Ascending aorta (tissue), 2 donors: ENCODE measurements at regions of chr19 and their contacts with region 1.

Region 1: GRCh38 chr19:39970675-39971379 is at the start of gene PSMC4:
- DNase-seq: peak; percentile 95 to 99
- H3K4me3 ChIP-seq: peak within 1 kb of the TSS; percentile 75 to 76
- H3K27ac ChIP-seq: peak within 1 kb of the TSS; percentile 86 to 90
- H3K4me1 ChIP-seq: peaks cover 0 to 14% of the 10 kb centered on the region in 2 donors
- H3K27me3 ChIP-seq: no peaks in the 10 kb centered on the region
- CTCF ChIP-seq: peak; percentile 66 to 78 (median 75)
- total RNA-seq, gene PSMC4: 122 TPM

Region 2: DNA sequence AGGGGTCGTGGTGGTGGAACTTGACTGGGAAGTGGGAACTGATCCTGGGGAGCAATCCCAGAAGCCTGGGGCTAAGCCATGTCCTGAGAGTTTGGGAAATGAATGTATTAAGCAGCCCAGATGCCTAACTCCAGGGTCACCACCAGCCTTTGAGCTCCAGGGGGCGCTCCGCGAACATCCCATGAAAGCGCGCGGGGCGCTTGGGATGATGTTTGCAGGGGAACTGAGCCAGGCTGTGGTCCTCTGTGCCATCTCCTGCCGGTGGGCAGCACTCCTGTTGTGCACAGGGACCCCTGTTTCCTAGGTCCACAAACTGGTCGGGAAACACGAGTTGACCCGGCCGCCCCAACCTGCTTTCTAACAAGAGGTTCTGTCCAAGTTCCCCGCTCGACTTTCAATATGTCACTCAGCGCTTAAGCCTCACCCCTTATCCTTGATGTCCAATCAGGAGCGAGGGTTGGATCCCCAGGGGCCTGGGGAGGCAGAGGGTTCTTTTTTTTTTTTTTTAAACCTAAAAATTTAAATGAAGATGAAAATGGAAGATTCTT is 177.8 kb before region 1 on chr19:
- intact Hi-C with region 1: loop called (anchors 1 kb)
- DNase-seq: peak; percentile 11 to 88
- H3K4me3 ChIP-seq: peak overlapping the region; percentile 55 to 57
- H3K27ac ChIP-seq: no peak overlapping the region
- H3K4me1 ChIP-seq: no peaks in the 10 kb centered on the region
- H3K27me3 ChIP-seq: no peaks in the 10 kb centered on the region
- CTCF ChIP-seq: peak; percentile 82 to 91 (median 89)

Region 3: DNA sequence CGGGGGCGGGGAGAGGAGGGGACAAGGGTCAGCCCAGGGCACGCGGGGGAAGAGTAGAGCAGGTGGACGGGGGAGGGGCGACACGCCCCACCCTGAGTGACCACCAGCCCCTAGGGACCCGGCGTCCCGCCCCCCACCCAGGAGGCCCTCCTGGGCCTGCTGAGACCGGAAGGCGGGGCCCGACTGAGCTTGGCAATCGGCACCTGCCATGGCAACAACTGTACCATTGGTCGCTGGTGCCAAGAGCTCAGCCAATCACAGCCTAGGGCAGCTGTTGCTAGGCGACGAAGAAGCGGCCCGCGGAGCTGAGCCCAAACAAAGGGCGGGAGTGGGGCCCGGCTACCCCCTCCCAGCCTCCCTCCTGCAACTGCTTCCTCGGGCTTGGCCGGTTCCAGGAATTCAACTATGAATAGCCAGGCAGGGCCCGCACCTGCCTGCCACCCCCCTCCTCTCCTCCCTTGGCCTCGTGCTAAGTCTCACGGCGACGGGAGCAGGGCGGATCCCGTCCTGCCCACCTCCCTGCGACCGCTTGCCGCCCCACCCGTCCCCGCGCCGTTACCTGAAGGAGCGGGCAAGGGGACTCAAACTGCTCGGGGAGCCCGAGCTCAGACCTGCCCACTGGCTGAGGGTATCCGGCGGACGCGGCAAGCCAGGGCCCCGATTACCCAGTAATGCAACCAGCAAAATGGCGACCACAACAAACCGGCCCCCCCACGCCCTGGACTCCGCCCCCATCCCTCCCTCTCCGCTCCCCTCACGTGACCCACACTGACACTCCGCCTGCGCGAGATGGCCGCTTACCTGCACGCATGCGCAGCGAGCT is 137.2 kb before region 1 on chr19 and contains the start of gene DYRK1B:
- intact Hi-C with region 1: loop called (anchors 2 kb)
- DNase-seq: peak; percentile 91 to 99
- H3K4me3 ChIP-seq: peak within 1 kb of the TSS; percentile 75 to 99
- H3K27ac ChIP-seq: peak within 1 kb of the TSS; percentile 77 to 93
- H3K4me1 ChIP-seq: peaks cover 0 to 17% of the 10 kb centered on the region in 2 donors
- H3K27me3 ChIP-seq: no peaks in the 10 kb centered on the region
- CTCF ChIP-seq: no peak
- total RNA-seq, gene DYRK1B: 34.7 TPM

Region 4: DNA sequence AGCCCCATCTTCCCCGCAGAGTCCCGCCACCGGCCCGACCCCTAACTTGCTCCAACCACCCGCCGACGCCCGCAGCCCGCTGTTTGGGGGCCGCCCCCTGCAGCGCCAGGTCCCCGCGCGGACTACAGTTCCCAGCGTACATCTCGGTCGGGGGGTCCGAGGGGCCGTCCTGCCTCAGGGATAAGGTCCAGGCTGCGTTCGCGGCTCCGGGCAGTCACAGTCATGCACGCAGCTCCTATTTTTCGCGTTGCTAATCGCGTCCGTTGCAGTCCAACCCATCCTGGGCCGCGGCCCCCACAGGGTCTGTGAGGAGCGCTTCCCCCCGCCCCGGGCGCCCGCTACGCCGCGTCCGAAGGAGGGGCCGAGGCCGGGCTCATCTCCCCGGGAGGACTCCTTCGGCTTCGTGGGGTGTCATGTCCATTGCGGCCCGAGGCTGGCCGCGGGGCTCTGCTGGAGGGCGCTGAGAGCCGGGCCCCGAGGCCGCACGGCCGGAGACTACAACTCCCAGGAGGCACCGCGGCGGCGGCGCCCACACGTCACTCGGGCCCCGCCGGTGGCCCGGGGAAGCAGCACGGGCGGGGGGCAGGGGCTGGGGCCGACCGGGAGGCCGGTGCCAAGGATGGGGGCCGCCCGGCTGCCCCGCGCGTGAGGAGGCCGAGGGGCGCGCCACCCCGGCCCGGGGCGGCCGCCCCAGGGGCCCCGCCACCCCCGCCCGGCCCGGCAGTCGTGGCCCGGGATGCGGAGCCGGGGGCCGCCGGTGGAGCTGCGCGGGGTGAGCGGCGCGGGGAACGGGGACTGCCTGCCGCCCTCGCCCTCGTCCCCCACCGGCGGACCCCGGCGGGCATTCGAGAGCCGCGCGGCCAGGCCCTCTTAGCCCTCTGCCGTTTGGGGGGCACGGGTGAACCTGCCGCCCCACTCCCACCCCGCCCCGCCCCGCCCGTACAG is 220.3 kb after region 1 on chr19 and contains the start of gene MAP3K10:
- intact Hi-C with region 1: loop called (anchors 5 kb)
- DNase-seq: peak in 1 of 2 donors; percentile 86
- H3K4me3 ChIP-seq: peak within 1 kb of the TSS; percentile 75 to 99
- H3K27ac ChIP-seq: peak within 1 kb of the TSS; percentile 92 to 99
- H3K4me1 ChIP-seq: peaks cover 9 to 22% of the 10 kb centered on the region in 2 donors
- H3K27me3 ChIP-seq: no peaks in the 10 kb centered on the region
- CTCF ChIP-seq: no peak
- total RNA-seq, gene MAP3K10: 19.4 TPM